Activated T-helper 1 cell treated with anti-CD3 and anti-CD28 coated beads, Interleukin-12 subunit alpha, Interleukin-12 subunit beta, Interleukin-2, Interleukin-4 antibody, amounts not matched to agents 30 ng/mL and 10 ng/mL and 1 ng/mL, durations not matched to agents 14 hours and 24 hours and 36 hours (primary cell): ENCODE measurements at regions of chr4 and their contacts with region 1.

Region 1: GRCh38 chr4:88591787-88592599 is at the start of gene HERC3:
- DNase-seq: peak; percentile 88
- H3K4me3 Mint-ChIP-seq: peak within 1 kb of the TSS; percentile 91
- H3K27ac Mint-ChIP-seq: peak within 1 kb of the TSS; percentile 88
- H3K4me1 Mint-ChIP-seq: peaks cover 35% of the 10 kb centered on the region
- H3K27me3 Mint-ChIP-seq: peaks cover 28% of the 10 kb centered on the region
- total RNA-seq, gene HERC3: 12.8 and 14.2 TPM in 2 replicates

Region 2: DNA sequence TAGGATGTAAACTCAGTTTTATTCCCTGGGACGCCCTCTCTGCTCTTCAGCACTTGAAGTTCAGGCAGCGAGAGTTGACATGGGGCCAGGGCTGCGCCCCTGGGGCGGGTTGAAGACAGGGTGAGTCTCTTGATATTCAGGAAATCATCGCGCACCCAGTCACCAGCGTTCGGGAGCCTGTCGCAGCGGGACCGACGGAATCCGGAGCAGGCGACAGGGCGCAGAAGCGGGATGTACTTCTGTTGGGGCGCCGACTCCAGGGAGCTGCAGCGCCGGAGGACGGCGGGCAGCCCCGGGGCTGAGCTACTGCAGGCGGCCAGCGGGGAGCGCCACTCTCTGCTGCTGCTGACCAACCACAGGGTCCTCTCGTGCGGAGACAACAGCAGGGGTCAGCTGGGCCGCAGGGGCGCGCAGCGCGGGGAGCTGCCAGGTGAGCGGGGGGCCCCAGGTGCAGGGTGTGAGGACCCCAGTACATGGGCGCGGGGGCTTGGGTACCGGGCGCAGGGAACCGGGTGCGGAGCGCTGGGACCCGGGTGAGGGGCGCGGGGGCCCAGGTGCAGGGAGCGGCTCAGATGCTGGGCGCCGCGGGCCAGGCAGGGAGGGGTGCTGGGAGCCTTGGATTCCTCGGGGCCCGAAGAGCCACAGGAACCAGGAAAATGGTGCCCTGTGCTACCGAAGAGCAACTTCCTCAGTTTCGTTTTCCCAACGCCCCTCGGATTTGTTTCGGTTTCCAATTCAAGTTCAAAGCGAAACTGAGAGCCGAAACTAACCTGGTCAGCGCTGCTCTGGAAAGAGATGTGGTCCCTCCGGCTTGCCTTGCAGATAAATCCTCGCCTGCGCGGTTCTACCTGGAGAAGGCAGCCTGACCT is 213.1 kb before region 1 on chr4 and contains the start of gene HERC6:
- intact Hi-C with region 1: loop called (anchors 2 kb)
- DNase-seq: peak; percentile 80
- H3K4me3 Mint-ChIP-seq: peak within 1 kb of the TSS; percentile 89
- H3K27ac Mint-ChIP-seq: peak within 1 kb of the TSS; percentile 81
- H3K4me1 Mint-ChIP-seq: peaks cover 47% of the 10 kb centered on the region
- H3K27me3 Mint-ChIP-seq: no peaks in the 10 kb centered on the region
- total RNA-seq, gene HERC6: 6.0 and 9.1 TPM in 2 replicates

Region 3: GRCh38 chr4:88613417-88613875 is 21.5 kb after region 1 on chr4:
- intact Hi-C with region 1: loop called (anchors 1 kb)
- DNase-seq: peak; percentile 20
- H3K4me3 Mint-ChIP-seq: peak overlapping the region; percentile 55
- H3K27ac Mint-ChIP-seq: peak overlapping the region; percentile 77
- H3K4me1 Mint-ChIP-seq: peaks cover 61% of the 10 kb centered on the region
- H3K27me3 Mint-ChIP-seq: no peaks in the 10 kb centered on the region

Region 4: GRCh38 chr4:88697588-88698329 is 105.8 kb after region 1 on chr4 and contains the start of gene NAP1L5:
- intact Hi-C with region 1: loop called (anchors 1 kb)
- DNase-seq: peak; percentile 61
- H3K4me3 Mint-ChIP-seq: peak within 1 kb of the TSS; percentile 88
- H3K27ac Mint-ChIP-seq: peak within 1 kb of the TSS; percentile 83
- H3K4me1 Mint-ChIP-seq: no peaks in the 10 kb centered on the region
- H3K27me3 Mint-ChIP-seq: peaks cover 2% of the 10 kb centered on the region
- total RNA-seq, gene NAP1L5: 5.5 and 6.1 TPM in 2 replicates

Region 5: GRCh38 chr4:88803600-88804096 is 211.7 kb after region 1 on chr4:
- intact Hi-C with region 1: loop called (anchors 2 kb)
- DNase-seq: peak; percentile 17
- H3K4me3 Mint-ChIP-seq: no peak overlapping the region
- H3K27ac Mint-ChIP-seq: no peak overlapping the region
- H3K4me1 Mint-ChIP-seq: peaks cover 13% of the 10 kb centered on the region
- H3K27me3 Mint-ChIP-seq: peaks cover 16% of the 10 kb centered on the region